GM12878 (cell line): ENCODE measurements at regions of chr2 and their contacts with region 1.

Region 1: DNA sequence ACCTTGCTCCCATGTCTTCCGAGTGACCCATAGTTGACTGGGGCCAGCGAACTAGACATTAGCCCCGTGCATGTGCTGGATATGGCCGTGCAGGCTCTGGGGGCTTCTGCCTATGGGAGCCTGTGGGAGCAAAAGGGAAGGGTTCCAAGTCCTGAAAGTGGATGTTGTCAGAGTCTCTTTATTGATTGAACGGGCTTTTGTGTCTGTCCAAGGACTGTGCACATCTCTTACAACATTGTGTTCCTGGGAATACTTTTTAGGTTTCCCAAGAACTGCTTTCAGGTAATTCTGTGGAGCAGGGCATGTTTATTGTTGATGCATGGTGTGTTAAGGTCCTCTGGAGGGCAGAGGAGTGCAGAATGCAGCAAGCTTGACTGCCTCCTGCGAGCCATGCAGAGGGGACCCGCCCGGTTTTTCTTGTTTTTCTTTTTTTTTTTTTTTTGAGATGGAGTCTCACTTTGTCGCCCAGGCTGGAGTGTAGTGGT is 5.0 kb downstream of the RNF144A start:
- DNase-seq: no peak
- ATAC-seq: peak; percentile 23; the same call in 2 of the 3 replicates
- H3K4me3 ChIP-seq: no peak overlapping the region
- H3K27ac ChIP-seq: no peak overlapping the region
- H3K4me1 ChIP-seq: 0 out of 2 replicates have a peak, but pooled peaks cover 5% of the 10 kb centered on the region
- H3K27me3 ChIP-seq: no peaks in the 10 kb centered on the region
- CTCF ChIP-seq: peak in 2 of 3 experiments; percentile 22 to 25; a peak in 3 of 6 replicates
- EP300 ChIP-seq: no peak
- POLR2A ChIP-seq: no peak
- RAD21 ChIP-seq: 0 out of 2 replicates have a peak, but pooled peaks have one; percentile 26

Region 2: DNA sequence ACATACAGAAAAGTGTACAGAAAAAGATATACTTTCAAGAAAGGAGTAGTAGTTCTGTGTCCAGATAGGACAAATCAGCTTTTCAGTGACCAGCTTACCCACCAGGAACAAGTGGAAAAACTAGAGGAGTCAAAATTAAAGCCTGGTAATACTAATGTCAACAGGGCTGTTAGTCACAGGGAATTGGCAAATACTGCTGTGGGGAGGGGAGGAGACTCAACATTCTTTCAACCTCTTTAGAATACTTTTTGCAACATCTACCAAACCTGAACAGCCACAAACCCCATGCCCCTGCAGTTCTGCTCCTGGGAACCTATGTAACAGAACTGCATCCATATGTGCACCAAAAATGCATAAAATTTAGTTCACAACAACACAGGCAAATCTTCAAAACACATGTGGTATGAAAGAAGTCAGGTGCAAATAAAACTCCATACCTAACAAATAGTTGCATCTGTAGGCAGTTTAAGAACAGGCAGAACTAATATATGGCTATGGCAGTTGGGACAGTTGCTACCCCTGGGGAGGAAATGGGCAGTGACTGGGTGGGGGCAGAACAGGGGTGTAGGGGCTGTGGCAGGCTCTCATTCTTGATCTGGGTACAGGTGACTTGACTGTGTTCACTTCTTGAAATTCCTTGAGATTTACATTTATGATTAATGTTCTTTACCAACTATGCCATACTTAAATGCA is 66.2 kb before region 1 on chr2:
- CTCF ChIA-PET with region 1: no interaction called
- POLR2A ChIA-PET with region 1: no interaction called
- RAD21 ChIA-PET with region 1: no interaction called
- SMC1A ChIA-PET with region 1: no interaction called
- in situ Hi-C with region 1: no loop called
- intact Hi-C with region 1: no loop called
- DNase-seq: no peak
- ATAC-seq: no peak
- H3K4me3 ChIP-seq: no peak overlapping the region
- H3K27ac ChIP-seq: no peak overlapping the region
- H3K4me1 ChIP-seq: no peaks in the 10 kb centered on the region
- H3K27me3 ChIP-seq: no peaks in the 10 kb centered on the region
- CTCF ChIP-seq: no peak
- EP300 ChIP-seq: no peak
- POLR2A ChIP-seq: no peak
- RAD21 ChIP-seq: no peak

Region 3: GRCh38 chr2:6957910-6958615 is 35.8 kb after region 1 on chr2:
- CTCF ChIA-PET with region 1: interaction called, 13 read pairs
- POLR2A ChIA-PET with region 1: no interaction called
- RAD21 ChIA-PET with region 1: no interaction called
- SMC1A ChIA-PET with region 1: interaction called, 3 read pairs
- in situ Hi-C with region 1: no loop called
- intact Hi-C with region 1: no loop called
- DNase-seq: no peak
- ATAC-seq: no peak
- H3K4me3 ChIP-seq: no peak overlapping the region
- H3K27ac ChIP-seq: no peak overlapping the region
- H3K4me1 ChIP-seq: no peaks in the 10 kb centered on the region
- H3K27me3 ChIP-seq: no peaks in the 10 kb centered on the region
- CTCF ChIP-seq: no peak
- EP300 ChIP-seq: no peak
- POLR2A ChIP-seq: no peak
- RAD21 ChIP-seq: no peak

Region 4: DNA sequence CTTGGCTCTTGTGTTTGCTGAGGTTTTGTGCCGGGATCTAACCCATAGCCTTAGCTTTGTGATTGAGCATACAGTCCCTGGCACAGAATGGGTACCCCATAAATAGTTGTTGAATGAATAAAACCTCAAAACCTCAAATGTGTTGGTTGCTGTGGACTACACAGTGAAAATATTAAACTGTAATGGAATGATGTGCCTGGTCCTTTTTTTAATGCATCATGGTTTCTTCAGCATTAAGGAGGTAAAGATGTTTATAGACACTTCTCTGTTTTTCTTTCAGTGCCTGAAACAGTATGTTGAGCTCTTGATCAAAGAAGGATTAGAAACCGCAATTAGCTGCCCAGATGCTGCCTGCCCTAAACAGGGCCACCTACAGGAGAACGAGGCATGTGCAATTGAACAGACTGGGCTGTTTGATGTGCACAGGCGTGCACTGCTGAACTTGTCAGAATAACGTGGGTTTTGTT is 92.0 kb after region 1 on chr2:
- CTCF ChIA-PET with region 1: interaction called, 29 read pairs
- POLR2A ChIA-PET with region 1: interaction called, 3 read pairs
- RAD21 ChIA-PET with region 1: interaction called, 15 read pairs
- SMC1A ChIA-PET with region 1: interaction called, 14 read pairs
- in situ Hi-C with region 1: no loop called
- intact Hi-C with region 1: no loop called
- DNase-seq: no peak
- ATAC-seq: peak; percentile 86
- H3K4me3 ChIP-seq: no peak overlapping the region
- H3K27ac ChIP-seq: no peak overlapping the region
- H3K4me1 ChIP-seq: no peaks in the 10 kb centered on the region
- H3K27me3 ChIP-seq: no peaks in the 10 kb centered on the region; a peak in 1 of 4 replicates
- CTCF ChIP-seq: peak; percentile 37 to 61 (median 58); a peak in 5 of 6 replicates
- EP300 ChIP-seq: no peak
- POLR2A ChIP-seq: no peak
- RAD21 ChIP-seq: peak; percentile 42